ENCODE measurements at regions of chr6 and their contacts with region 1.

Region 1: DNA sequence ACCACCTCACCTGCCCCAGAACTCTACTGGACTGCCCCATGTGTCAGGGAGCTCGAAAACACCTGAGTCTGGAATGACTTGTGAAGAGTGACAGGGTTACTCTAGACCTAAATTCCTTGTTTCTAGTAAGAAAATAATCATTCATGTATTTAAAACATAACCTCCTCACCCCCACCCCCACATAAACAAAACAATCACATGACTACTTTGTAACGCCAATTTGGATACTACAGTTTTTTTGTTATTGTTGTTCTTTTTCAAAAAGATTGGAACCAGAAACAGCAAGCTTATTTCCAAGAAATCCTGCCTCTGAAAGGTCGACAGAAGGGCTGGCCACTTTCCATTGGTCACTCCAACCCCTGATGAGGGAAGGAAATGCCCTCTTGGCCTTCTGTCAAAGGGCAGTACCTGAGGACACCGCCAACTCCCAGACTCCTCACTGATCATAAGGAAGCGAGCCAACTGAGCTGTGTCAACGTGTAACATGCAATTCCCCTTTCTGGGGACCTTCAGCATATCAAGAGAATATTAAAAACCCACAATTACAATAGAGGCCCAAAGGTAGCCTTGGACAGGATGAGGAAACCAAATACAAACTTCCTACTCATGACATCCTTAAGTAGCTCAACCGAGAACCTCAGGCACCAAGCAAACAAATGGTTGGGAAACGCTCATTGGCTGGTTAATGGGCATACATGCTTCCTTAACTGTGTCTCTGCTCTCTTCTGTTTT is 2.6 kb downstream of the MCUR1 start:
- DNase-seq: no peak
- H3K4me3 Mint-ChIP-seq: no peak overlapping the region
- H3K27ac Mint-ChIP-seq: no peak overlapping the region
- H3K4me1 Mint-ChIP-seq: peaks cover 18% of the 10 kb centered on the region
- H3K27me3 Mint-ChIP-seq: no peaks in the 10 kb centered on the region
- CTCF ChIP-seq: no peak

Region 2: DNA sequence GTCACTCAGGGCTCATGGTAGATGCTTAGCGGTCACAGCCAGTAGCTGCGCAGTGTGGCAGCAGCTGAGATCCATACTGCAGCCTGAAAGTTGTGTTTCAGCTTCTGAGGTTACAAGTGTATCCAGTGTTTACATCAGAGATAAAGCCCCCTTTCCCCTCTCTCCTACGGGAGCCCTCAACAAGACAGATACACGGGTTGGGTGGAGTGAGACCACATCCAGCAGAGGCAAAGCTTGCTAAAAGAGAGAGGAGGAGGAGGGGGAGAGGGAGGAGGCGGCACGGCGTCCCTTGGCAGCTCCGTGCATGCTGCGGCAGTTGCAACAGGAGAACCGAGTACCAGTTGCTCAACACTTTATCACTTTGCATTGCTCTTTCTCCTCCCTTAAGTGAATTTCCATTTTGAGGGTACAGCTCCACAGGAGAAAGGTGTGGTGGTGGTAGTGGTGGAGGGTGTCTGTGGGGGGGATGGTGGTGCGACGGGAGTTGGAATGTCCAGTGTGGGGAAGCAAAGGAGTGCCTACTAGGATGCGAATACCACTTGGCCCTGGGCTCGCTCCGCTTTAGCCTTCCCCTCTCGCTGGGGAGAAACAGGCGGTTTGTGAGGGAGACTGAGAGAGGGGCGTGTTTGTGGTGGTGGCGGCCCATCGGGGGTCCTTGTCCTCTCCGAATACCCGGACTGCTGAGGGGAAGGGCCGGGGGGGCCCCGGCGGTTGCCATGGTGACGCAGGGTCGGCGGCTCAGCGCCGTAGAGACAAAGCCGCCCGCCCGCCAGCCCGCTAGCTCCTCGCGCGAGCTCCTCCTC is 112.6 kb after region 1 on chr6:
- CTCF ChIA-PET with region 1: no interaction called
- intact Hi-C with region 1: no loop called
- DNase-seq: no peak
- H3K4me3 Mint-ChIP-seq: peak overlapping the region; percentile 69
- H3K27ac Mint-ChIP-seq: no peak overlapping the region
- H3K4me1 Mint-ChIP-seq: peaks cover 6% of the 10 kb centered on the region
- H3K27me3 Mint-ChIP-seq: peaks cover 24% of the 10 kb centered on the region
- CTCF ChIP-seq: no peak

Region 3: DNA sequence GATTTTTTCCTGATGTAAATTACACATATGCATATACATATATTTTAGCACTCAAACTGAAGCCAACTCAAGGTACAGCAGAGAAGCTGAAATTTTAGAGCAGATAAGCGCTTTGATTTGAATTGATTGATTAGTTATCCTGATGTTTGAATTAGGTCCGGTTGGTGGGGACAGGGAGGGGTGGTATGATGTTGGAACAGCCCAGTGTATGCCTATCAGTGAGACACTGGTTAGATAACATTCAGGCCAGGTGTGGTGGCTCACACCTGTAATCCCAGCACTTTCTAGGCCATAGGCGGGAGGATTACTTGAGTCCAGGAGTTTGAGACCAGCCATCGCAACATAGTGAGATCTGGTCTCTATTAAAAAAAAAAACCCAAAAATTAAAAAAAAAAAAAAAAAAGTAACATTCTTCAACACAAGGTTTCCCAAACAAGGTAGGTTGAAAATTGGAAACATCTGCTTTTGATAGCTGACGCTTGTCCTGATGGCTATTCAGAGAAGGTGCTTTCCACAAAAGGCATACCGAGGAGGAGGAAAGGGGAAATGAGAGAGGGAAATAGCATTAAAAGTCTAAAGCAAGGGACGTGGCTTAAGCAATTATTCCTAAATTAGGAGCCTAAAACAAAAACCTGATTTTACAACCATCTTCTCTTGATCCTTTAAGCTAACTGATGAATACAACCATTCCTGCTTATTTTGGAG is 1145.7 kb after region 1 on chr6:
- CTCF ChIA-PET with region 1: interaction called, 10 read pairs
- intact Hi-C with region 1: no loop called
- DNase-seq: no peak
- H3K4me3 Mint-ChIP-seq: no peak overlapping the region
- H3K27ac Mint-ChIP-seq: no peak overlapping the region
- H3K4me1 Mint-ChIP-seq: no peaks in the 10 kb centered on the region
- H3K27me3 Mint-ChIP-seq: no peaks in the 10 kb centered on the region
- CTCF ChIP-seq: no peak